Left ventricle myocardium superior (tissue), 1 donor: ENCODE measurements at regions of chr9 and their contacts with region 1.

Region 1: GRCh38 chr9:33721674-33722358 is 73.5 kb upstream of the PRSS3 start:
- DNase-seq: peak; percentile 93
- ATAC-seq: peak; percentile 89

Region 2: DNA sequence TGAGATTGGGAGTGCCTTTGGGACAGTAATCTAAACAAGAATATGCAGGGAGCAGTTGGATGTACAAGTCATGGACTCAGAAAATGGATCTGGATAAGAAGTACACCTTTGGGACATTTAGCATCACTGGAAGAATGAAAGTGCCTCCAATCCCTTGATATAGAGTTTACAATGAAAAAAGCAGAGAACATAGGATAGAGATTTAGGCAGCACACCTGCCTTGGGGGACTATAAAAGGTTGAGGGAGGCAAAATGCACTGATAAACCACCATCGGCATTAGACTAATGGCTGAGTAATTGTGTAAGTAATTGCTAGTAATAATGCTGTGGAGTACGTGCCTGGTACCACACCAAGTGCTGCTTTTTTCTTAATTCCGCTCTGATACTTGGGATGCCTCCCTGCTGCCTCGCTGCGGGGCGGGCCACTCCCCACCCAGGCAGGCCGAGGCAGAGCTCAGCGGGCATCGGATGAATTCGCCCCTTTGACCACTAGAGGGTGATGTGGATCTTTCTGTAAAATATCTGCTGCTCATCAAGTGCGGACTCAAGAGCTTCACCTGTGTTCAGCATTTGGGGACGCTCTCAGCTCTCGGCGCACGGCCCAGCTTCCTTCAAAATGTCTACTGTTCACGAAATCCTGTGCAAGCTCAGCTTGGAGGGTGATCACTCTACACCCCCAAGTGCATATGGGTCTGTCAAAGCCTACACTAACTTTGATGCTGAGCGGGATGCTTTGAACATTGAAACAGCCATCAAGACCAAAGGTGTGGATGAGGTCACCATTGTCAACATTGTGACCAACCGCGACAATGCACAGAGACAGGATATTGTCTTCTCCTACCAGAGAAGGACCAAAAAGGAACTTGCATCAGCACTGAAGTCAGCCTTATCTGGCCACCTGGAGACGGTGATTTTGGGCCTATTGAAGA is 97.9 kb before region 1 on chr9:
- intact Hi-C with region 1: loop called (anchors 5 kb)
- DNase-seq: peak; percentile 50
- ATAC-seq: peak; percentile 85

Region 3: GRCh38 chr9:33924978-33925797 is 203.4 kb after region 1 on chr9:
- intact Hi-C with region 1: no loop called
- DNase-seq: peak; percentile 46
- ATAC-seq: peak; percentile 72